Activated naive CD4-positive, alpha-beta T cell treated with anti-CD3 and anti-CD28 coated beads for 36 hours (primary cell): ENCODE measurements at regions of chr1 and their contacts with region 1.

Region 1: GRCh38 chr1:172895050-172895460 is 155.7 kb downstream of the TNFSF18 start:
- DNase-seq: peak; percentile 40
- H3K4me3 Mint-ChIP-seq: no peak overlapping the region
- H3K27ac Mint-ChIP-seq: peak overlapping the region; percentile 9
- H3K4me1 Mint-ChIP-seq: peaks cover 42% of the 10 kb centered on the region
- H3K27me3 Mint-ChIP-seq: peaks cover 4% of the 10 kb centered on the region

Region 2: DNA sequence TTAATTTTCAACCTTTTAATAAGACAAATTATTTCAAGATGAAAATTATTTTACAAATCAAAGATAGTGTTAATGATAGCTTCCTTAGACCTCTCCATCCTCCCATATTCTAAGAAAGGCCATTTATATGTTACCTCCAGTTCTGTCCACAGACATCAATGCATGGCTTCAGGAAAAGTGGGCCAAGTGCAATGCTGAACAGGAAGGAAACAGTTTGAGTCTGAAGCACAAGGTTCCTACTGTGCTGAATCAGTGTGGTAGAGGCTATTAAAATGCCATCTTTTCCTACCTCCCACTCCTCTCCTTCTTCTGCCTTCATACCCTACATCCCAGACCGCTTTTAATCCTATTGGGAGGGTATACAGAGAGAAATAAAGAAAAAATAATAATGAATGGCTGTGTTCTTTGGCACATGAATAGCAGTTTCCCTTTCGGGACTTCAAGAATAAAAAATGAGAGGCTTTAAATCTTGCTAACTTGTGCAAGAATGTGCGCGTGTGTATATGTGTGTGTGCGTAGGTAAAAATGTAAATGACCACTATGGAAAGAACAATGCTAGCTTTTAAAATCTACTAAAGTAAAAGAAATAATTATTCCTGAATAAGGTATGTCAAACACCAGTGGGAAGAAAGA is 537.2 kb before region 1 on chr1:
- CTCF ChIA-PET with region 1: no interaction called
- intact Hi-C with region 1: loop called (anchors 2 kb)
- DNase-seq: no peak
- H3K4me3 Mint-ChIP-seq: no peak overlapping the region
- H3K27ac Mint-ChIP-seq: peak overlapping the region; percentile 55
- H3K4me1 Mint-ChIP-seq: peaks cover 64% of the 10 kb centered on the region
- H3K27me3 Mint-ChIP-seq: no peaks in the 10 kb centered on the region

Region 3: GRCh38 chr1:172761581-172762025 is 133.5 kb before region 1 on chr1:
- CTCF ChIA-PET with region 1: no interaction called
- intact Hi-C with region 1: loop called (anchors 5 kb)
- DNase-seq: no peak
- H3K4me3 Mint-ChIP-seq: no peak overlapping the region
- H3K27ac Mint-ChIP-seq: no peak overlapping the region
- H3K4me1 Mint-ChIP-seq: peaks cover 57% of the 10 kb centered on the region
- H3K27me3 Mint-ChIP-seq: no peaks in the 10 kb centered on the region

Region 4: DNA sequence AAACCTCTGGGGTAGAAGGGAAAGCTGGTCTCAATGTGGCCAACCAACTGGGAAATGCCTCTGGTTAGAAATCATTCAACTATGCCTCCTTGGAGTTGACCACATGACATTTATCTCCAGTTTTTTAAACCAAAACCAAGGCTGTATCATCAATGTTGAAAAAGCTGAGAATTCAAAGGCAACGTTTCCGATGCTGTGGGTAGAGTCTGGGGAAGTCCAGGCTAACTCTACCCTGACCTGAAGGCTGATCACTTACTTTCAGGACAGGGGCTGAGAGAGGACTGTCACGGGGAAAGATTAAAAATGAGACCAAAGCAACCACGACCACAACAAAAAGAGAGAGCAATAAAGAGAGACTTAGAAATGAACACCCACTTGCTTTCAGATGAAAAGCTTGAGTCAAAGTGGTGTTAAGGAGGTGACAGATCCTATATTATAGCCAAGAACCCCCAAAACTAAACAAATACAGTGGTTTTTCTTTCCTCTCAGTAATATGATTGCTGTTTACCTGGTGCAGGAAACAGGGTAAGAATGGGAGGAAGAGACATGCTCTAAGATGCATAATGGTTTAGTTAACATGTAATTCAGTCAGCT is 402.8 kb after region 1 on chr1:
- CTCF ChIA-PET with region 1: no interaction called
- intact Hi-C with region 1: loop called (anchors 1 kb)
- DNase-seq: peak; percentile 76
- H3K4me3 Mint-ChIP-seq: no peak overlapping the region
- H3K27ac Mint-ChIP-seq: peak overlapping the region; percentile 2
- H3K4me1 Mint-ChIP-seq: peaks cover 41% of the 10 kb centered on the region
- H3K27me3 Mint-ChIP-seq: no peaks in the 10 kb centered on the region

Region 5: GRCh38 chr1:173476664-173477285 is 581.7 kb after region 1 on chr1:
- CTCF ChIA-PET with region 1: no interaction called
- intact Hi-C with region 1: loop called (anchors 5 kb)
- DNase-seq: peak; percentile 86
- H3K4me3 Mint-ChIP-seq: peak overlapping the region; percentile 91
- H3K27ac Mint-ChIP-seq: peak overlapping the region; percentile 93
- H3K4me1 Mint-ChIP-seq: peaks cover 58% of the 10 kb centered on the region
- H3K27me3 Mint-ChIP-seq: no peaks in the 10 kb centered on the region